ENCODE measurements at regions of chr11 and their contacts with region 1.

Region 1: DNA sequence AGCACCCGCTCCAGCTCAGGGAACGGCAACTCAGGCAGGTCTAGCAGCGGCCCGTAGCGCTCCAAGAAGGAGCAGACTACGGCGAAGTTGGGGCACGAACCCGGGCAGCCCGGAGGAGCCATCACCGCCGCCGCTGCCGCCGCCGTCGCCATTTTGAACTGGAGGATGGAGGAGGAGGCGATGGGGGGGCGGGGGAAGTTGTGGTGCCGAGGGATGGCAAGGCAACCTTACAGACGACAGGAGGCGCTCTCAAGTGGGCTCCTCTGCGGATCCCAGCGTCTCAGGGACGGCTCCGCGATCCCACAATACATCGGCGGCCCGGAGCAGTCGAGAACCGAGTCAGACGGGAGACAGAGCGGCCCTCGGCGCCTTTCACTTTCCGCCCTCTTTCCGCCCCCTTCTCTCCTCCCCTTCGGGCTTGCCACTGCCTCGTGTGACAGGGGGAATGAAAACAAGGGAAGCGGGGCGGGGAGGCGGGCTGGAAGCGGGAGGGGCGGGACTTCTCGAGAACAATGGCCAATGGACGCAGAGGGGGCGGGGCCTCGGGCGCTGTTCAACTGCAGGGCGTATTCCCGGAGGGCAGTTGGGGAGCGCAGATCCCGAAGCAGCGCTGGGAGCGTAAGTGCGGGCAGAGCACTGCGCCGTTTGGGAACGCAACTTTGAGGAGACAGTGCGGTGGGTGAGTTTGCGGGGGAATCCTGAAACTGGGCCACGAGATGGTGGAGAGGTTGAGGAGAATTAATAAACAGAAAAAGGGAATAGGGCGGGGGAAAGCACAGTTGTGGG is at the starts of genes AAMDC and RSF1:
- DNase-seq: peak; percentile 99 to 100 (median 99)
- ATAC-seq: peak; percentile 96 to 97
- H3K4me3 ChIP-seq: peak within 1 kb of the TSS; percentile 89
- H3K27ac ChIP-seq: peak within 1 kb of the TSS; percentile 78
- H3K4me1 ChIP-seq: no peaks in the 10 kb centered on the region
- H3K27me3 ChIP-seq: no peaks in the 10 kb centered on the region
- total RNA-seq, gene AAMDC: 67.4 to 114 (median 86.7) TPM
- total RNA-seq, gene RSF1: 41.3 to 53.1 (median 46.2) TPM

Region 2: DNA sequence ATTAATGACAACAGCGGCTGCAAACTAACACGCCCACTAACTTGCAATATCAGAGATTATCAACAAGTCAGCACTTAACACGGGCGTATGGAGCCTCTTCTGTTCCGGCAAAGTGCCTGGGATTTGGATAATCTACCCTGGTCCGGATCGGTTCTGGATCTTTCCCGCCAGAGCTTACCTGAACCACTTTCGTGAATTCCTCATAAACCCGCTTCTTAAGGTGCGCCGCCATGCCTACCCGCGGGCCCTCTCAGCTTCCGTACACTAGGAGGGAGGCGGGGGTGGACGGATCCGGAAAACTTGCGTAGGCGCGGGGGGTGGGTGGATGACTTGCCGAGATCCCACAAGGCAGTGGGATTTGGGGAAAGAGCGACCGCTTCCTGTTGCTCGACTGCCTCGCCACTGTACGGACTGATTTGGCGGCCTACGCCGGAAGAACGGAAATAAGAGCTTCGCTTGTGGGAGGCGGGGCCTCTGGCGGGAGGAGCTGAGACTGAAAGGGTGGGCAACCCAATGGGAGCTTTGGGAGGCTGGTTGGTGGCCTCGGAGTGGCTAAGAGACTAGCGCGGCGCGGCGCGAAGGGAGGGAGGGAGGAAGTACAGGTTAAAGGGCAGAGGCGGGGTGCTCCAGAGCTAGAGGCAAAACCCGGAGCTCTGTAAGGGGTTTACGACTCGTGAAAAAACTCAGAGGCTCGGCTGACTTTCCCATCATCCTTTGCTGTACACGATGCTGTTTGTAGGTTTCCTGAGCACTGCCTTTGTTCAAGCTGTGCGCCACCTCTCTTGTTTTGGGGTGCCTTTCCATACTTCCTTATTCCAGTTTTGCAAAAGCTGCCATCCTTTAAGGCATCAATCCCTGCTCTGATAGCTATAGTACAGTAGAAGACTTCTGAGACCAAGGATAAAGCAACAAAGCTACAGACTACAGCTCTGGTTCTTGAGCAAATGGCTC is 173.9 kb after region 1 on chr11 and contains the start of gene INTS4:
- intact Hi-C with region 1: loop called in 1 of 4 experiments (anchors 10 kb)
- DNase-seq: peak; percentile 99 to 100 (median 99)
- ATAC-seq: peak; percentile 99 to 100
- H3K4me3 ChIP-seq: peak within 1 kb of the TSS; percentile 93
- H3K27ac ChIP-seq: peak within 1 kb of the TSS; percentile 90
- H3K4me1 ChIP-seq: no peaks in the 10 kb centered on the region
- H3K27me3 ChIP-seq: no peaks in the 10 kb centered on the region
- total RNA-seq, gene INTS4: 14.1 to 15.3 (median 14.9) TPM

Region 3: DNA sequence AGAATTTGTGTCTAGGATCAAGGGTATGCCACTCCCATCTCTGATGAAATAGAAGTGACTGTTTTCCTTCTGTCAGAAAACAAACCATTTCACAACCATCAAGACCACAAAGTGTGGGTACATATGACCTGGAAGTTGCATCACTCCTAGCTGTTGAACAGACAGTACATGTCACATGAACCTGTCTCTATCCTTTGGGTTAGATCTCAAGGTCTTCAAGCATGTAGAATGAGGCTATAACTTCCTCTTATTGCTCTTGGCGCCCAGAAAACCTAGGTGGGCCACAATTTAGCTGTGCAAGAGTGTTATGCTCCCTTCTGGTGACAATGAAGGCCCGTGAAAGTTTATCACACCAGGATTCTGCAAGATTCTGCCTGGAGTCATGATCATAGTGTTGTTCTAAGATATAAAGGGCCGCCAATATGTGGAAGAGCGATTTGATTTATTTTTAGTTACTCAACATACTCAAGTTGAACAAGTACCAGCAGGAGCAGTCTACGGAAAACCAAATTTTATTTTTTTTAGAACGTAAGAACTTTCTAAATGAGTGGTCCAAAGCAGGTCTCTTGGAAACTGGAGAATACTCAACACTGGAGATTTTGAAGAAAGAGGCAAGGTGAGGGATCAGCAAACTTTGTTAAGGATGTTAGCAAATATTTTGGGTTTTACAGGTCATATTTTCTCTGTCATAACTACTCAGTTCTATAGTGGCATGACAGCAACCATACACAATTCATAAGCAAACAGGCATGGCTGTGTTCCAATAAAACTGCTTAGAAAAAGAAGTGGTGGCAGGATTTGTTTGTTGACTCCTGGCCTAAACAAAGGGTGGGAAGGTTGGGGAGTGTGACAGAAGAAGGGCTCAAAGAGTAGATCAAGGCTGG is 469.8 kb after region 1 on chr11:
- intact Hi-C with region 1: no loop called
- DNase-seq: no peak
- ATAC-seq: peak; percentile 71 to 72
- H3K4me3 ChIP-seq: no peak overlapping the region
- H3K27ac ChIP-seq: no peak overlapping the region
- H3K4me1 ChIP-seq: no peaks in the 10 kb centered on the region
- H3K27me3 ChIP-seq: no peaks in the 10 kb centered on the region

Measured in right cardiac atrium (tissue), 5 donors.